PC-3 (cell line): ENCODE measurements at regions of chr1 and their contacts with region 1.

Region 1: GRCh38 chr1:165697881-165698760 is at the start of gene ALDH9A1:
- DNase-seq: peak; percentile 92
- ATAC-seq: peak; percentile 85
- H3K4me3 ChIP-seq: peak within 1 kb of the TSS; percentile 97
- H3K27ac ChIP-seq: peak within 1 kb of the TSS; percentile 76
- H3K4me1 ChIP-seq: peaks cover 18% of the 10 kb centered on the region
- H3K27me3 ChIP-seq: no peaks in the 10 kb centered on the region
- CTCF ChIP-seq: peak; percentile 62
- total RNA-seq, gene ALDH9A1: 58.8 and 78.0 TPM in 2 replicates

Region 2: GRCh38 chr1:165376041-165376810 is 321.9 kb before region 1 on chr1:
- CTCF ChIA-PET with region 1: no interaction called
- POLR2A ChIA-PET with region 1: no interaction called
- intact Hi-C with region 1: loop called (anchors 10 kb)
- DNase-seq: peak; percentile 94
- ATAC-seq: peak; percentile 83
- H3K4me3 ChIP-seq: peak overlapping the region; percentile 68
- H3K27ac ChIP-seq: peak overlapping the region; percentile 89
- H3K4me1 ChIP-seq: peaks cover 23% of the 10 kb centered on the region
- H3K27me3 ChIP-seq: no peaks in the 10 kb centered on the region
- CTCF ChIP-seq: no peak

Region 3: GRCh38 chr1:165630629-165631341 is 67.3 kb before region 1 on chr1 and contains the start of gene MGST3:
- CTCF ChIA-PET with region 1: interaction called, 8 read pairs
- POLR2A ChIA-PET with region 1: no interaction called
- intact Hi-C with region 1: loop called (anchors 1 kb)
- DNase-seq: peak; percentile 97
- ATAC-seq: peak; percentile 81
- H3K4me3 ChIP-seq: peak within 1 kb of the TSS; percentile 90
- H3K27ac ChIP-seq: peak within 1 kb of the TSS; percentile 84
- H3K4me1 ChIP-seq: peaks cover 36% of the 10 kb centered on the region
- H3K27me3 ChIP-seq: no peaks in the 10 kb centered on the region
- CTCF ChIP-seq: no peak
- total RNA-seq, gene MGST3: 117 and 168 TPM in 2 replicates

Region 4: GRCh38 chr1:165678509-165678908 is 19.6 kb before region 1 on chr1:
- CTCF ChIA-PET with region 1: interaction called, 4 read pairs
- POLR2A ChIA-PET with region 1: interaction called, 3 read pairs
- intact Hi-C with region 1: loop called (anchors 1 kb)
- DNase-seq: no peak
- ATAC-seq: no peak
- H3K4me3 ChIP-seq: no peak overlapping the region
- H3K27ac ChIP-seq: no peak overlapping the region
- H3K4me1 ChIP-seq: peaks cover 16% of the 10 kb centered on the region
- H3K27me3 ChIP-seq: no peaks in the 10 kb centered on the region
- CTCF ChIP-seq: no peak

Region 5: GRCh38 chr1:165768513-165769394 is 70.6 kb after region 1 on chr1 and contains the start of gene TMCO1:
- CTCF ChIA-PET with region 1: no interaction called
- POLR2A ChIA-PET with region 1: interaction called, 3 read pairs
- intact Hi-C with region 1: loop called (anchors 1 kb)
- DNase-seq: peak; percentile 99
- ATAC-seq: peak; percentile 97
- H3K4me3 ChIP-seq: peak within 1 kb of the TSS; percentile 91
- H3K27ac ChIP-seq: peak within 1 kb of the TSS; percentile 77
- H3K4me1 ChIP-seq: peaks cover 39% of the 10 kb centered on the region
- H3K27me3 ChIP-seq: no peaks in the 10 kb centered on the region
- CTCF ChIP-seq: no peak
- total RNA-seq, gene TMCO1: 63.7 and 80.6 TPM in 2 replicates

Region 6: DNA sequence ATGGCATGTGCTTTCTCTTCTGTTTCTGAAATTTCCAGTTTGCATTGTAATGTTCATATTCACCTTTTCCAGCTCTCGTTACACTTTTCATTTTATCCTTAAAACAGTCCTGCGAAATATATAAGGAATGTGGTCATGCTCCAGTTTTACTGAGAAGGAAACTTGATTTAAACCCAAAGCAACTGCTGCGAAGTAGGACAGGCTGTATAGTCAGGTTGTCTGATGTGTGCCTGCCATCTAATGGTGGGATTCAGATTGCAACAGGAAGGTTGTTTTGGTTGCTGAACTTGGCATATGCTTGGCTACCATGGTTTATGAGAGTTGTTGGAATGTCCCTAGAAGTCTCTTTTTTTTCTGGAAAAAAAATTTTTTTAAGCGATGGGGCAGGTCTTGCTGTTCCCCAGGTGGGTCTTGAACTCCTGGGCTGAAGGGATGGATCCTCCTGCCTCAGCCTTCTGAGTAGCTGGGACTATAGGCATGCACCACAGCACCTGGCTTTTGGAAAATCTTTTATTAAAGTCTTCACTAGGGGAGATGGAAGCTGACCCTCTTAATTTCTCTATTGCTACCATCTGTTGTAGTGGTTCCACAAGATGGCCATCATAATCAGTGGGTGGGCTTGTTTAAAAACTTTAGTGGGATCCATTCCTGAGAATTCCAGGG is 216.1 kb after region 1 on chr1:
- CTCF ChIA-PET with region 1: no interaction called
- POLR2A ChIA-PET with region 1: no interaction called
- intact Hi-C with region 1: loop called (anchors 1 kb)
- DNase-seq: peak; percentile 91
- ATAC-seq: peak; percentile 88
- H3K4me3 ChIP-seq: no peak overlapping the region
- H3K27ac ChIP-seq: no peak overlapping the region
- H3K4me1 ChIP-seq: no peaks in the 10 kb centered on the region
- H3K27me3 ChIP-seq: no peaks in the 10 kb centered on the region
- CTCF ChIP-seq: peak; percentile 98